RWPE1 (cell line): ENCODE measurements at regions of chr20 and their contacts with region 1.

Region 1: DNA sequence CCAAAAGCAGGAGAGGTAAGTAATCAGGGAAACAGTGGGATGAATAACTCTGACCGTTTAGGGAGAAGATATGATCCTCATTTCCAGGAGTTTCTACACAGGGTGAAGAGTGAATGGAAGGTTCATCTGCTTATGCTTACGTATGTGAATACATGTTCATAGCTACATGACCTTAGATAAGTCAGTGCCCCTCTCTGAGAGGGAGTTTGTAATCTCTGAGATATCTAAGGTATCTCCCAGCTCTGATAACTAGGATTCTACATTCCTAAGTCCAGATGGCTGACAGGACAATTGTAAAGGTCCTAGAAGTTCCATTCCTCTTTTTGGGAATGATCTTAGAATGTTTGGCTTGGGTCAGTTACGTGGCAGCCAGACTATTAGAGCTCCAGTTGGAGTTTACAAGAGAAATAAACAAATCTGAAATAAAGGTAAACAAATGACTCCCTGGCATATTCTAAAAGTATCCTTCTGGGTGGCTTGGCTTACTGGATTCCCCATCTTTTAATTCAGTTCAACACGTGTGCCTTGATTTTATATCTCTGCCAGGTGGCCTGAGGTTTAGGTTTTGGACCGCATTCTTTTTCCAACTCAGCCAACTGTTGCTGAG is 15.8 kb downstream of the PROCR start:
- DNase-seq: no peak
- H3K27ac ChIP-seq: no peak overlapping the region
- CTCF ChIP-seq: no peak

Region 2: GRCh38 chr20:35151736-35152135 is 36.0 kb before region 1 on chr20:
- CTCF ChIA-PET with region 1: no interaction called
- POLR2A ChIA-PET with region 1: no interaction called
- DNase-seq: no peak
- H3K27ac ChIP-seq: no peak overlapping the region
- CTCF ChIP-seq: no peak

Region 3: DNA sequence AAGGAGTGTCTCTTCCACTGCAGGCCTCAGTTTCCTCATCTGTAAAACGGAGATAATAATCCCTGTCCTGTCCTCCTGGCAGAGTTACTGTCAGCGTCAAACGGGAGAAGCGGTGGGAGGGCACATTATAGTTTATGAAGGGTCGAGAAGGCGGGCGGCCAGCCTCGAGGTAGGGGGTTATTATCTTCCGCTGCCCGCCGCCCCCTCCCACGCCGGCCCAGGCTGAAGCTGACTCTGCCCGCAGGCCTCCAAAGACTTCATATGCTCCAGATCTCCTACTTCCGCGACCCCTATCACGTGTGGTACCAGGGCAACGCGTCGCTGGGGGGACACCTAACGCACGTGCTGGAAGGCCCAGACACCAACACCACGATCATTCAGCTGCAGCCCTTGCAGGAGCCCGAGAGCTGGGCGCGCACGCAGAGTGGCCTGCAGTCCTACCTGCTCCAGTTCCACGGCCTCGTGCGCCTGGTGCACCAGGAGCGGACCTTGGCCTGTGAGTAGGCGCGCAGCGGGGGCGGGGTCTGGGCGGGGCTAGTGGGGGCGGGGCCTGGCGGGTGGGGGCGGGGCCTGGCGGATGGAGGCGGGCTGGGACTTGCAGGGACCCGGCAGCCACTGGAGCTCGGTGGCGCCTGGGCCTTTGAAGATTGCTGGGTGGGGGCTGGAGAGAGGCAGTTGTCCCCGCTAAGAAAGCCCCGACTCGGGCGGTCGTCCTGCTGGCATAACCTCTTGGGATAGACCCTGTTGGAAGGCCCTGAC is 13.1 kb before region 1 on chr20:
- CTCF ChIA-PET with region 1: interaction called, 3 read pairs
- POLR2A ChIA-PET with region 1: interaction called, 13 read pairs
- DNase-seq: peak; percentile 80
- H3K27ac ChIP-seq: no peak overlapping the region
- CTCF ChIP-seq: no peak

Region 4: GRCh38 chr20:35776513-35777101 is 588.9 kb after region 1 on chr20:
- CTCF ChIA-PET with region 1: no interaction called
- POLR2A ChIA-PET with region 1: no interaction called
- DNase-seq: no peak
- H3K27ac ChIP-seq: no peak overlapping the region; the same call in 1 of the 2 replicates
- CTCF ChIP-seq: no peak